ENCODE measurements at regions of chr5 and their contacts with region 1.

Region 1: GRCh38 chr5:178075840-178076548 is 37.3 kb upstream of the N4BP3 start:
- DNase-seq: peak; percentile 72
- ATAC-seq: peak; percentile 94

Region 2: GRCh38 chr5:178146020-178146820 is 70.2 kb after region 1 on chr5:
- intact Hi-C with region 1: loop called (anchors 5 kb)
- DNase-seq: peak; percentile 78
- ATAC-seq: peak; percentile 42

Region 3: DNA sequence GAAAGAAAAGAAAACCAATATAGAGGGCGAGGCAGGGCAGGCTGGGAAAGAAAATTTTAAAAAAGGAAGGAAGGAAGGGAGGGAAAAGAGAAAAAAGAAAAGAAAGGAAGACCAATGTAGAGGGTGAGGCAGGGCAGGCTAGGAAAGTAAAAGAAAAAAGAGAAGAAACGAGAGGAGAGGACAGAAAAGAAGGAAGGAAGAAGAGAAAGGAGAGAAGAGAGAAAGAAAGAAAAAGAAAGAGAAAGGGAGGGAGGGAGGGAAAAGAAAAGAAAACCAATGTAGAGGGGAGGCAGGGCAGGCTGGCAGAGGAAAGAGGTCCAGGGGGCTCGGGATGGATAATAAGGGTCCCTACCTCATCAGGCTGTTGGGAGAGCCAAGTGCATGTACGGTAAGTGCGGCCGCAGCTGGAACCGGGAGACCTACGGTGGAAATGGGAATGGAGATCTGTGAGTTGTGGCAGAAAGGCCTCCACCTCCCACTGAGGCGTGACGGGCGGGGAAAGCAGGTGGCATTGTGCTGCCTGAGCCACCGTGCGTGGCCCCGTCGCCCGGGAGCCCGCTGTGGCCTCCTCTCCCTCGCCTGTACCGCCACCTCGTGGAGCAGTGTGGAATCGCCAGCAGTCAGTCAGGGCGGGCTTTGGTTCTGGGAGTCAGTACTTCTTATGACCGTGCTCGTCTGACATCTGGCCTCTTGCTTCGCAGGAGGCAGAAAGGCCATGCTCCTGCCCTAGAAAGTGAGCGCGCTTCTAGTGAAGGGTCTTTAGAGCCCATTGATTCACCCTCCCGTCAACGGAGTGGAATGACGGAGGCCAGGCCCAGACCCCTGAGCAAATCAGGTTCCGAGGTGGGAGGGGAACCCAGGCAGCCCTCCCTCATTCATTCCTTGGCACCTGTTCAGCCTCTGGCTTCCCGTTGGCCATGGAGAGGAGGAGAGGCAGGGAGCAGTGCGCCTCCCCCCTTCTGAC is 88.1 kb after region 1 on chr5:
- intact Hi-C with region 1: loop called (anchors 1 kb)
- DNase-seq: peak; percentile 90
- ATAC-seq: peak; percentile 97

Region 4: DNA sequence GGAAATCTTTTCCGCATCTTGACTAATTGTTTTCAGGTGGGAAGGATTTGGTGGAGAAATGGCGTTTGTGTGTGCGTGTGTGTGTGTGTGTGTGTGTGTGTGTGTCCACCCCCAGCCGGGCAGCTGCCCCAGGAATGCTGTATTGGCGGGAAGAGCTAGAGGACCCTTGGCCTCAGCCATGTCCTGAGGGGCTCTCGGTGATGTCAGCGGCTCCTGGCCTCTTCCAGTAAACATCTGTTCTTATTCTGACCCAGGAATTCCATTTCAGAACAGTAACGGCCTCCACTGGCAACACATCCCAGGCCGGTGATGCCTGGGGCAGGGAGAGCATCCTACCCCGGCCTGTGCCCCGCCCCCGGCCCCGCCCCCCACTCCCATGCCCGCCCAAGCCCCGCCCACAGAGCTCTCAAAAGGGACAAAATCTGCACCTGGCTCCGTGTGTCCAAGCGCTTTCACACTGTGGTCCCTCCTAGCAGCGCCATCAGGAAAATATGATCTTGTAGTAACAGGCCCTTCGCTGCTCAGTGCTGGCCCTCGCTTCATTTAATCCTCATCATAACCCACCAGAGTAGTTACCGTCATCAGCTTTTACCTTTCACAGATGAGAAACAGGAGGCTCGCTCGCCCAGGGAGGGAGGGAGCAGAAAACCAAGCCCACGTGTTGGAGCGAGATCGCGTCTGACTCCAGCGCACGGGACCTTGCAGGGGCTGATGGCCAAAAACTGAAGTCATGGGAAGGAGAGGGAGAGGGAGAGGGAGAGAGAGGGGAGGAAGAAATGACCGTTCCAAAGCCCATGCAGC is 1250.3 kb after region 1 on chr5:
- intact Hi-C with region 1: no loop called
- DNase-seq: peak; percentile 82
- ATAC-seq: peak; percentile 86

Measured in Right ventricle myocardium superior (tissue), 1 donor.